HCT116 (cell line): ENCODE measurements at regions of chr1 and their contacts with region 1.

Region 1: DNA sequence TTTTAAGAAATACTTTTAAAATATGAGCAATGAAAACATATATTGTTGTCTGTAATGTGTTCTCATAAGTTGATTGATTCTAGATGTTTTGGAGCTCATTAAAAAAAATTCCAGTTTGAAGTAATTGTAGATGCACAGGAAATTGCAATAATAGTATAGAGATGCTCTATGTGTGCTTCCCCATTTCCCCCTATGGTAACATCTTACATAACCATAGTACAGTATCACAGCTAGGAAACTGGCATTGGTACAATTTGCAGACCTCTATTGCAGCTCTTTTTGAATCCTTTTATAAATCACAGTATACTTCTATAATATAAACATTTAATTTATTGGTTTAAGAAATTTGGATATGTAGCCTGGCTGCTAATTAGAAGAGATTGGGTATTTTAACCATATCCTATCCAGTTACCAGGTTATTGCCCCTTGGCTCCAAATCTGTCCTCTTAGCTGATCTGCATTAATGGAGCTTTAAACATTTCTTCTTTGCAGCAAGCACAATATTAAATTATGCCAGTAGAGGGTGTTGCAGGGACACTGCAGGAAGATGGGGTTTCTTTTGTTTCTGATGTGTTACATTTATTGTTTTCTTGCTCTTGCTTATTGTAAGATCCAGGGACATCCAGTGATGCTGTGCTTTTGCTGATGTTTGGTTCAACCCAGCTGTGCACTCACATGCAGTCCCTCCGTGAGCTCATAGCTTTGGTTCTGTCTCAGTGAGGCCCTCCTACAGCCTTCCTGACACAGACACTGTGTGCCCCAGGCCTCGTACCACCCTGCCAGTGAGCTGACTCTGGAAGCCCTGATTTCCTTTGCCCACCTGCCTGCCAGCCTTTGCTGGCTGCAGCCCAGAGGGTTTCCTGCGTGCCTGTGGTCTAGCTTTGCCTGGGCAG is 103.3 kb downstream of the RABGAP1L start:
- DNase-seq: peak; percentile 15
- ATAC-seq: peak; percentile 71
- H3K4me3 ChIP-seq: no peak overlapping the region
- H3K27ac ChIP-seq: no peak overlapping the region
- H3K4me1 ChIP-seq: no peaks in the 10 kb centered on the region
- H3K27me3 ChIP-seq: no peaks in the 10 kb centered on the region
- CTCF ChIP-seq: peak; percentile 60 to 78 (median 77)
- POLR2A ChIP-seq: no peak
- RAD21 ChIP-seq: peak; percentile 89

Region 2: GRCh38 chr1:174276087-174276486 is 13.5 kb after region 1 on chr1:
- CTCF ChIA-PET with region 1: interaction called, 12 read pairs
- POLR2A ChIA-PET with region 1: no interaction called
- RAD21 ChIA-PET with region 1: no interaction called
- intact Hi-C with region 1: no loop called
- DNase-seq: no peak
- ATAC-seq: no peak
- H3K4me3 ChIP-seq: no peak overlapping the region
- H3K27ac ChIP-seq: no peak overlapping the region
- H3K4me1 ChIP-seq: no peaks in the 10 kb centered on the region
- H3K27me3 ChIP-seq: no peaks in the 10 kb centered on the region
- CTCF ChIP-seq: no peak
- POLR2A ChIP-seq: no peak
- RAD21 ChIP-seq: no peak

Region 3: DNA sequence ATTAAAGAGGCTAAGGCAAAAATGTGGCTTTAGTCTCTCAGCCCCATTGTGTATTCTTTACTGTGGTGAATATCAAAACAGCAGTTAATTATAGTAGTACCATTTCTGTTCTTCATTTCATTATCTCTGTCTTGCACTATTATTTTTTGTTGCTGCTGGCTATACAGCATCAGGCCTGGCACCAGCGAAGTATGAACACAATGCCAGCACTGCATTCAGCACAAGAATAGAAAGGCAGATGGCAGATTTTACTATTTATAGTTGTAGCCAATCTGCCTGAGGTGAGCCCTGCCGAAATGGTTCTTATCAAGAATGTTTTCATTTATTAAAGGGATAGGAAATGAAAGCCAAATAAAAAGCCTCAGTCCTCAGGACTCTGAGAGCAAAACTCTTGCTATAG is 257.2 kb after region 1 on chr1:
- CTCF ChIA-PET with region 1: no interaction called
- POLR2A ChIA-PET with region 1: no interaction called
- RAD21 ChIA-PET with region 1: no interaction called
- intact Hi-C with region 1: no loop called
- DNase-seq: no peak
- ATAC-seq: no peak
- H3K4me3 ChIP-seq: no peak overlapping the region
- H3K27ac ChIP-seq: no peak overlapping the region
- H3K4me1 ChIP-seq: no peaks in the 10 kb centered on the region
- H3K27me3 ChIP-seq: no peaks in the 10 kb centered on the region
- CTCF ChIP-seq: no peak
- POLR2A ChIP-seq: no peak
- RAD21 ChIP-seq: no peak

Region 4: DNA sequence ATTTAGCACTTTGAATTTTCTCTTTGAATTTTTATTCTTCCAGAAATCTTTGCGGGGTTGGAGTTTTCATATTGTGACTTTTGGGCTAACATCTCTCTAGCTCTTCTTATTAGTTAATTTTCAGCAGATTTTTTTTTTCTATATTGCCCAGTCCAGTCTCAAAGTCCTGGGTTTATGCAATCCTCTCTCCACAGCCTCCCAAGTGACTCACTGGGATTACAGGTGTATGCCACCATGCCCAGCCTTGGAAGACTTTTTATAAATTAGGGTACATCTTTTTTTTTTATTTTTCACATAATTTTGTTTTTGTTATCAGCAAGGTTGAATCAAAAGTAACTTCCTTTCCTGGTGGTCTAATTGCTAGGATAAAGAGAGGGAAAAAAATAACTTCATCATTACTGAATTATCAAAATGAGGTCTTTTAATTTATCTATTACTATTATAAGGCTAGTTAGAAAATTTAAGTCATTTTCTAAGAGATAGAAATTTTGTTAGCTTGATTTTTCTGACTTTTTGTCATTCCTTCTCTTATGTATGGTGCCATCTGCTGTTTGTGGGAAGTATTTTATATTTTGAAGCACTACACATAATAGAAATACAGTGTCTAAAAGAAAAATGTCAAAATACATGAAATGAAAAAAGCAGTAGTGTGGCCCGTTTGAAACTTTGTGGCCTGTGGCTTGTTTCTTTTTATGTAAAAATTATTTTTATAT is 463.7 kb after region 1 on chr1:
- CTCF ChIA-PET with region 1: interaction called, 70 read pairs
- POLR2A ChIA-PET with region 1: interaction called, 3 read pairs
- RAD21 ChIA-PET with region 1: interaction called, 5 to 8 read pairs
- intact Hi-C with region 1: loop called (anchors 1 kb)
- DNase-seq: peak; percentile 10
- ATAC-seq: no peak
- H3K4me3 ChIP-seq: no peak overlapping the region
- H3K27ac ChIP-seq: no peak overlapping the region
- H3K4me1 ChIP-seq: no peaks in the 10 kb centered on the region
- H3K27me3 ChIP-seq: no peaks in the 10 kb centered on the region
- CTCF ChIP-seq: peak; percentile 34 to 59 (median 50); a peak in 4 of 6 replicates
- POLR2A ChIP-seq: no peak
- RAD21 ChIP-seq: peak; percentile 70

Region 5: DNA sequence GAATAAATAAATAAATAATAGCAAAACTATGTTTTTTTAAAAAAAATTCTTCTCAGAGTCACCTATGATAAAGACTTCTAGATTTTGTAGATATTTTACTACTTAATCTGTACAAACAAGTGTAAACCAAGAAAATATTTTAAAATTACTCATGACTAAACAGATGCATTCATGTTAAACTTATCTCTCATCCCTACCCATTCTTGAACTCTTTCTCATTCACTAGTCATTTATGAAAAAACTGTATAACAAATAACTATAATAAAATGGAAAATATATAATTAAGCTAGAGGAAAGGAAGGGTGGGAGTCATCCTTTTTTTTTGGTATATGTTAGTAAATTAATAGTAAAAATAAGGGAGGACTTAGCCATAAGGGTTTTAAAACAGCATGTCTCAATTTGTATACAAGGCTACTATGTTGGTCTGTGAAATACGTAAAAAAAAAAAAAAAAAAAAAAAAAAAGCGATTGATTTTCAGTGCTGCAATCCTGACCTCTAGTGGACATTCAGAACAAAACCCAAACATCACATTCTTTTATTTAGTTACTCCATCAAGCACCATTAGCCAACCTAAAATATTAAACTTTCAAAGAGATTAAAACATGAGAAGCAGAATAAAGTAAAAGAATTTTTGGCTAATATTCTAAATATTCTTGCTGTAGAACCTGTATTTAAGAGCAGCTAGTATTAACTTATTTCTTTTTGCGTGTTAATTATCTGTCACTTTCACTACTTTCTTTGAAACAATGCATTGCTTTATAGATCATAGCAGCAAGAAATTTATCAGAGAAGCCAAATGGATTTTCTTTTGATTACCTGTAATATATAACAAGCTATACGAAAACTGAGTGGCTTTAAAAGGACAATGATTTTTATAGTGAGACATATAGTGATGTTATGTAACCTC is 481.3 kb after region 1 on chr1:
- CTCF ChIA-PET with region 1: interaction called, 75 read pairs
- POLR2A ChIA-PET with region 1: no interaction called
- RAD21 ChIA-PET with region 1: interaction called in 1 of 2 experiments, 3 read pairs
- intact Hi-C with region 1: loop called (anchors 1 kb)
- DNase-seq: peak; percentile 28
- ATAC-seq: no peak; the same call in 1 of the 2 replicates
- H3K4me3 ChIP-seq: no peak overlapping the region
- H3K27ac ChIP-seq: no peak overlapping the region
- H3K4me1 ChIP-seq: no peaks in the 10 kb centered on the region
- H3K27me3 ChIP-seq: no peaks in the 10 kb centered on the region
- CTCF ChIP-seq: peak; percentile 53 to 75 (median 60); a peak in 5 of 6 replicates
- POLR2A ChIP-seq: no peak
- RAD21 ChIP-seq: peak; percentile 78

Region 6: GRCh38 chr1:174999216-174999925 is 736.8 kb after region 1 on chr1:
- CTCF ChIA-PET with region 1: interaction called, 3 read pairs
- POLR2A ChIA-PET with region 1: interaction called, 5 read pairs
- RAD21 ChIA-PET with region 1: interaction called in 1 of 2 experiments, 3 read pairs
- intact Hi-C with region 1: loop called (anchors 5 kb)
- DNase-seq: peak; percentile 97
- ATAC-seq: peak; percentile 83
- H3K4me3 ChIP-seq: peak overlapping the region; percentile 87 to 96
- H3K27ac ChIP-seq: peak overlapping the region; percentile 77
- H3K4me1 ChIP-seq: peaks cover 8 to 32% of the 10 kb centered on the region in 2 experiments
- H3K27me3 ChIP-seq: no peaks in the 10 kb centered on the region
- CTCF ChIP-seq: no peak
- POLR2A ChIP-seq: peak; percentile 92
- RAD21 ChIP-seq: no peak